ENCODE measurements at regions of chrX and their contacts with region 1.

Region 1: GRCh38 chrX:123976706-123977316 is 15.3 kb downstream of the STAG2 start:
- H3K4me3 ChIP-seq: no peak overlapping the region
- H3K27ac ChIP-seq: no peak overlapping the region
- H3K4me1 ChIP-seq: peaks cover 16% of the 10 kb centered on the region
- CTCF ChIP-seq: peak; percentile 51

Region 2: GRCh38 chrX:123960042-123960611 is 16.7 kb before region 1 on chrX:
- CTCF ChIA-PET with region 1: interaction called, 12 read pairs
- POLR2A ChIA-PET with region 1: interaction called, 5 read pairs
- H3K4me3 ChIP-seq: peak overlapping the region; percentile 72
- H3K27ac ChIP-seq: peak overlapping the region; percentile 99
- H3K4me1 ChIP-seq: no peaks in the 10 kb centered on the region
- CTCF ChIP-seq: peak; percentile 92

Region 3: GRCh38 chrX:124113799-124114600 is 137.2 kb after region 1 on chrX:
- CTCF ChIA-PET with region 1: no interaction called
- POLR2A ChIA-PET with region 1: interaction called, 14 read pairs
- H3K4me3 ChIP-seq: no peak overlapping the region
- H3K27ac ChIP-seq: no peak overlapping the region
- H3K4me1 ChIP-seq: no peaks in the 10 kb centered on the region
- CTCF ChIP-seq: no peak

Measured in HEK293 (cell line).